ENCODE measurements at regions of chr4 and their contacts with region 1.

Region 1: DNA sequence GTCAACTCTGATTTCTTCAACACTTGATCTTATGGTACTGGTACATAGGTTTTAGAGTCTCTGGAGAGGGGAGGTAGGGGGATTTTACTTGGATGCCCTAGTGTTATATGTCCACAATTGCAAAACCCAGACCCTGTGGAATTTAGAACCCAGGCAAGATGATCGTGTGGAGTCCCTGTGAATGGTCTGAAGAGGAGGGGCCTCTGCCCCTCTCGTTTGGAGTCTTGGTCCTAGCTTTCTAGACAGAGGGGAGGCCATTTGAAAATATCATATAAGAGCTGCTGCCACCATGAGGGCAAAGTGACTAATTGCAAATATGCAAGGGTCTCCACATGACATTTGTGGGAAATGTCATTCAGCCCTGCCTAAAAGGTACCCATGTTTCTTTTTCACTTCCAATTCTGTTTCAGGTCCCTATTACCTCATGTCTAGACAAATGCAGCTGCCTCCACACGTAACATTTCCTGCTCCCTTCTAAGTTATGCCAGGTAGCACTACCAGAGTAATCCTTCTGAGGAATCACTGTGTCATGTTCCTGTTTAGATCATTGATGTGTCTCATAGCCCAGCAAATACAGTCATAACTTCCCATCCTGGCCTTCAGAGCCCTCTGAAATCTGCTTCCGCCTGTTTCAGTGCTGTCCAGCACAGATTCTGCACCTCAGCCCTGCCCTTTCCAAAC is 126.8 kb downstream of the KLHL8 start:
- DNase-seq: peak; percentile 66
- H3K4me3 Mint-ChIP-seq: no peak overlapping the region
- H3K27ac Mint-ChIP-seq: peak overlapping the region; percentile 53
- H3K4me1 Mint-ChIP-seq: peaks cover 44% of the 10 kb centered on the region
- H3K27me3 Mint-ChIP-seq: no peaks in the 10 kb centered on the region

Region 2: GRCh38 chr4:86586160-86586572 is 507.4 kb before region 1 on chr4:
- CTCF ChIA-PET with region 1: no interaction called
- intact Hi-C with region 1: no loop called
- DNase-seq: no peak
- H3K4me3 Mint-ChIP-seq: no peak overlapping the region
- H3K27ac Mint-ChIP-seq: no peak overlapping the region
- H3K4me1 Mint-ChIP-seq: no peaks in the 10 kb centered on the region
- H3K27me3 Mint-ChIP-seq: peaks cover 7% of the 10 kb centered on the region

Region 3: GRCh38 chr4:87017580-87018342 is 75.8 kb before region 1 on chr4:
- CTCF ChIA-PET with region 1: interaction called, 4 read pairs
- intact Hi-C with region 1: loop called (anchors 1 kb)
- DNase-seq: peak; percentile 37
- H3K4me3 Mint-ChIP-seq: no peak overlapping the region
- H3K27ac Mint-ChIP-seq: peak overlapping the region; percentile 88
- H3K4me1 Mint-ChIP-seq: peaks cover 82% of the 10 kb centered on the region
- H3K27me3 Mint-ChIP-seq: no peaks in the 10 kb centered on the region

Region 4: GRCh38 chr4:87058356-87059073 is 35.1 kb before region 1 on chr4:
- CTCF ChIA-PET with region 1: interaction called, 5 read pairs
- intact Hi-C with region 1: loop called (anchors 2 kb)
- DNase-seq: peak; percentile 68
- H3K4me3 Mint-ChIP-seq: peak overlapping the region; percentile 2
- H3K27ac Mint-ChIP-seq: peak overlapping the region; percentile 24
- H3K4me1 Mint-ChIP-seq: peaks cover 51% of the 10 kb centered on the region
- H3K27me3 Mint-ChIP-seq: no peaks in the 10 kb centered on the region

Region 5: GRCh38 chr4:87073199-87074120 is 20.1 kb before region 1 on chr4:
- CTCF ChIA-PET with region 1: interaction called, 9 read pairs
- intact Hi-C with region 1: loop called (anchors 1 kb)
- DNase-seq: peak; percentile 77
- H3K4me3 Mint-ChIP-seq: peak overlapping the region; percentile 55
- H3K27ac Mint-ChIP-seq: peak overlapping the region; percentile 67
- H3K4me1 Mint-ChIP-seq: peaks cover 44% of the 10 kb centered on the region
- H3K27me3 Mint-ChIP-seq: no peaks in the 10 kb centered on the region

Region 6: DNA sequence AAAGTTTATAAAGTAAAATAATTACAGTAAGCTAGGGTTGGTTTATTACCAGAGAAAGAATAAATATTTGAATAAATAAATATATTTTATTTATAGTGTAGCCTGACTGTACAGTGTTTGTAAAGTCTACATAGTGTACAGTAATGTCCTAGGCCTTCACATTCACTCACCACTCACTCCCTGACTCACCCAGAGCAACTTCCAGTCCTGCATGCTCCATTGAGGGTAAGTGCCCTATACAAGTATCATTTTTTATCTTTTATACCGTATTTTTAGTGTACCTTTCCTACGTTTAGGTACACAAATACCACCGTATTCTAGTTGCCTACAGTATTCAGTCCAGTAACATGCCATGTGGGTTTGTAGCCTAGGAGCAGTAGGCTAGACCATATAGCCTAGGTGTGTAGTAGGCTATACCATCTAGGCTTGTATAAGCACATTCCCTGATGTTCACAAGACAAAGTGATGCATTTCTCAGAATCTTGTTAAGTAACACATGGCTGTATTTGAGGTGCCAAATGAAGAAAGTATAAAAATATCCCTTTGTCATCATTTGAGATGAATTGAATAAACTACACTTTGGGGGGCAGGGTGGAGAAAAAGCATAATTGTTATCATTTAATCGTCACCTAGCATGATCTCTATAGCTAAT is 141.6 kb after region 1 on chr4:
- CTCF ChIA-PET with region 1: interaction called, 4 read pairs
- intact Hi-C with region 1: loop called (anchors 5 kb)
- DNase-seq: no peak
- H3K4me3 Mint-ChIP-seq: no peak overlapping the region
- H3K27ac Mint-ChIP-seq: no peak overlapping the region
- H3K4me1 Mint-ChIP-seq: no peaks in the 10 kb centered on the region
- H3K27me3 Mint-ChIP-seq: peaks cover 2% of the 10 kb centered on the region

Region 7: GRCh38 chr4:87353592-87353991 is 260.0 kb after region 1 on chr4:
- CTCF ChIA-PET with region 1: no interaction called
- intact Hi-C with region 1: no loop called
- DNase-seq: peak; percentile 50
- H3K4me3 Mint-ChIP-seq: no peak overlapping the region
- H3K27ac Mint-ChIP-seq: no peak overlapping the region
- H3K4me1 Mint-ChIP-seq: no peaks in the 10 kb centered on the region
- H3K27me3 Mint-ChIP-seq: no peaks in the 10 kb centered on the region

Measured in activated naive CD4-positive, alpha-beta T cell treated with anti-CD3 and anti-CD28 coated beads for 36 hours (primary cell).